PC-3 (cell line): ENCODE measurements at regions of chr9 and their contacts with region 1.

Region 1: GRCh38 chr9:24614070-24614469 is 68.4 kb upstream of the IZUMO3 start:
- DNase-seq: peak; percentile 6
- ATAC-seq: peak; percentile 50; the same call in 1 of the 2 replicates
- H3K4me3 ChIP-seq: no peak overlapping the region
- H3K27ac ChIP-seq: no peak overlapping the region
- H3K4me1 ChIP-seq: no peaks in the 10 kb centered on the region
- H3K27me3 ChIP-seq: no peaks in the 10 kb centered on the region
- CTCF ChIP-seq: peak; percentile 41

Region 2: DNA sequence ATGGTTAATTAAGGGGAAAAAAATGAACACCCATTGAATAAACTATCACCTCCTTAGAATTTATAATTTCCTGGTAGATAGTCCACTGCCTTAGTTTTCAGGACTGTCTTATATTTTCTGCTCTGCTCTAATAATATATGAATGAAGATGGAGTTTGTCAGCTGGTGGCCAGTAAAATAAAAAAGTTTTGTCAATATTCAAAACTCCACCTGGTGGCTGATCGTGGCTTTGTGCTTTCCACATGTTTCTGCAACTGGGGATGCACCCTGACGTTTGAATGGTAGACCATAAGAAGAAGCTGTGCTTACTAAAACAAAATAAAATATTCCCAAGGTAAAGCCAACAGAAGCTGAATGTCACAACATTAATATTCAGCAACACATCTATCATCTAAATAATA is 218.2 kb after region 1 on chr9:
- CTCF ChIA-PET with region 1: no interaction called
- POLR2A ChIA-PET with region 1: no interaction called
- intact Hi-C with region 1: loop called (anchors 1 kb)
- DNase-seq: peak; percentile 32
- ATAC-seq: no peak
- H3K4me3 ChIP-seq: no peak overlapping the region
- H3K27ac ChIP-seq: no peak overlapping the region
- H3K4me1 ChIP-seq: no peaks in the 10 kb centered on the region
- H3K27me3 ChIP-seq: no peaks in the 10 kb centered on the region
- CTCF ChIP-seq: peak; percentile 52